ENCODE measurements at regions of chr18 and their contacts with region 1.

Region 1: DNA sequence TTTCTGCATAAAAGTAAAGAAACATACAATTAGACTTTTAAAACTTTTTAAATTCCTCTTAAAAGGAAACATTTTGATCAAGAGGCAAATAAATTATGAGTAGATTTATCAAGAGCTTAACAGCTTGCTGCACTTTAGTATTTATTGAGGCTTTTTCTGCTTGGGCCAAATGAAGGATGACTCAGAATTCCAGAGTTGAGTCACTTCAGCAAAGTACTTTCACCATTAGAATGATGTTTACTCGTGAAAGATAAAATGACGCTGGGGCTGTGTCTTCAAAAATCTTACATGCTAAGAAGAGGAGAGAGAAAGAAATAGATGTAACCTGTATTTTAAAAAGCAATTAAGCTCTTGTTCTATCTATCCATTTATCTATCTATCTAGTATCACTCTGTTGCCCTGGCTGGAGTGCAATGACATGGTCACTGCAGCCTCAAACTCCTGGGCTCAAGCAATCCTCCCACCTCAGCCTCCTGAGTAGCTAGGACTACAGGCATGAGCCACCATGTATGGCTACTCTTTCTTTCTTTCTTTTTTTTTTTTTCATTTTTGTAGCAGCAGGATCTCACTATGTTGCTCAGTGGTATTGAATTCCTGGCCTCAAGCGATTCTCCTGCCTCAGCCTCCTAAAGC is 75.3 kb upstream of the RIOK3 start:
- DNase-seq: peak; percentile 77
- H3K4me3 Mint-ChIP-seq: peak overlapping the region; percentile 46
- H3K27ac Mint-ChIP-seq: peak overlapping the region; percentile 84
- H3K4me1 Mint-ChIP-seq: peaks cover 24% of the 10 kb centered on the region
- H3K27me3 Mint-ChIP-seq: no peaks in the 10 kb centered on the region
- CTCF ChIP-seq: no peak

Region 2: GRCh38 chr18:22800551-22800951 is 577.2 kb before region 1 on chr18:
- CTCF ChIA-PET with region 1: interaction called, 10 read pairs
- POLR2A ChIA-PET with region 1: interaction called, 4 read pairs
- intact Hi-C with region 1: no loop called
- DNase-seq: no peak
- H3K4me3 Mint-ChIP-seq: no peak overlapping the region
- H3K27ac Mint-ChIP-seq: no peak overlapping the region
- H3K4me1 Mint-ChIP-seq: peaks cover 8% of the 10 kb centered on the region
- H3K27me3 Mint-ChIP-seq: no peaks in the 10 kb centered on the region
- CTCF ChIP-seq: no peak

Region 3: DNA sequence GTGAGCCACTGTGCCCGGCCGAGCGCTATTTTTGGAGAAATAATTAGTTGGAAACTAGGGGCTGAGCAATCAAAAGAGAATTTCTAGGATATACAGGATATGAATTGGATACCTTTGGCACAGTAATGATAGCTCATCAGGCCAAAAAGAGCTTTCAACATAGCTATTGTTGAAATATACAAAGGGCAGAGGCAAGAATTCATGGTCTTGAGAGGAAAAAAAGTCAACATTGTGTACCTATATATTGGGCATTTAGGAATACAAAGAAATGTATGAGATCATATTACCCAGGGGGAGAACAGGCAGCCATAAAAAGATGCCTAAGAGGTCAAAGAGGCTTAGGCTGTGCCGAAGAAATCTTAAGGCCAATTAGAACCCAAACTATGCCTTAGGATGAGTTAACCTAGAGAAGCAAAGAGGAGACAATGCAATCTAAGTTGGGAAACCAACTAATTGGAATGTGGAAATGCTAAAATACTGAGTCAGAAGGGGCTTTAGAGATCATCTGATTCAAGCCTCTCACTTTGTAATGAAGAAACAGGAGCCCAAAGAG is 345.7 kb before region 1 on chr18:
- CTCF ChIA-PET with region 1: interaction called, 58 read pairs
- POLR2A ChIA-PET with region 1: interaction called, 38 read pairs
- intact Hi-C with region 1: loop called (anchors 1 kb)
- DNase-seq: peak; percentile 75
- H3K4me3 Mint-ChIP-seq: no peak overlapping the region
- H3K27ac Mint-ChIP-seq: peak overlapping the region; percentile 50
- H3K4me1 Mint-ChIP-seq: peaks cover 17% of the 10 kb centered on the region
- H3K27me3 Mint-ChIP-seq: no peaks in the 10 kb centered on the region
- CTCF ChIP-seq: no peak

Region 4: DNA sequence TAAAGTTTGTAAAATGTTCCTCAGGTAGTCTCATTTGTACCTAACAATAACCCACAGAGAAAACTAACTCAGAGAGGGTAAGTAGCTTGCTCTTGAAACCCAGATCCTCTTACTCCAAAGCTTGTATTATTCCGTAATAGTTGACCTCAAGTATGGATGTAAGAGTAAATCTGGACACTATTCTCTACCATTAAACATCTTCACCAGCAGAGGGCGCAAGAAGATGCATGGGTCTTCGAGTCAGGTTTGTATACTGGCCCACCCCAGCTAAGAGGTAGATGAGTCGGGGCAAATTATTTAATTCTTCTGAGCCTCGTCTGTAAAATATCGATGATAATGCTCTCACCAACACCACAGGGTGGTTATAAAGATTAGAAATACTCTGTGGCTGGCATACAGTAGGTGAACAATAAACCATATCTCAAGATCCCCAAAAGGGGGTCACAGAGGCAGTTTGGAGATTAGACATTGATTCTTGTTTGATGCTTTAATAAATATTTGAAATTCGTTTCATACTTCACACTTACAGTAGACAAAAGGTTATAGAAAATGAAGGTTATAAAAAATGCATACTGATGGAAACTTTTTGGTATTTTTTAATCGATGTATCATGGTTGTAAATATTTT is 246.0 kb before region 1 on chr18:
- CTCF ChIA-PET with region 1: interaction called, 67 read pairs
- POLR2A ChIA-PET with region 1: interaction called, 44 read pairs
- intact Hi-C with region 1: loop called (anchors 1 kb)
- DNase-seq: peak; percentile 90
- H3K4me3 Mint-ChIP-seq: no peak overlapping the region
- H3K27ac Mint-ChIP-seq: no peak overlapping the region
- H3K4me1 Mint-ChIP-seq: peaks cover 11% of the 10 kb centered on the region
- H3K27me3 Mint-ChIP-seq: no peaks in the 10 kb centered on the region
- CTCF ChIP-seq: peak; percentile 54

Region 5: GRCh38 chr18:23250893-23251656 is 126.7 kb before region 1 on chr18:
- CTCF ChIA-PET with region 1: interaction called, 4 read pairs
- POLR2A ChIA-PET with region 1: interaction called, 4 read pairs
- intact Hi-C with region 1: loop called (anchors 2 kb)
- DNase-seq: peak; percentile 73
- H3K4me3 Mint-ChIP-seq: no peak overlapping the region
- H3K27ac Mint-ChIP-seq: peak overlapping the region; percentile 75
- H3K4me1 Mint-ChIP-seq: peaks cover 13% of the 10 kb centered on the region
- H3K27me3 Mint-ChIP-seq: no peaks in the 10 kb centered on the region
- CTCF ChIP-seq: no peak

Region 6: DNA sequence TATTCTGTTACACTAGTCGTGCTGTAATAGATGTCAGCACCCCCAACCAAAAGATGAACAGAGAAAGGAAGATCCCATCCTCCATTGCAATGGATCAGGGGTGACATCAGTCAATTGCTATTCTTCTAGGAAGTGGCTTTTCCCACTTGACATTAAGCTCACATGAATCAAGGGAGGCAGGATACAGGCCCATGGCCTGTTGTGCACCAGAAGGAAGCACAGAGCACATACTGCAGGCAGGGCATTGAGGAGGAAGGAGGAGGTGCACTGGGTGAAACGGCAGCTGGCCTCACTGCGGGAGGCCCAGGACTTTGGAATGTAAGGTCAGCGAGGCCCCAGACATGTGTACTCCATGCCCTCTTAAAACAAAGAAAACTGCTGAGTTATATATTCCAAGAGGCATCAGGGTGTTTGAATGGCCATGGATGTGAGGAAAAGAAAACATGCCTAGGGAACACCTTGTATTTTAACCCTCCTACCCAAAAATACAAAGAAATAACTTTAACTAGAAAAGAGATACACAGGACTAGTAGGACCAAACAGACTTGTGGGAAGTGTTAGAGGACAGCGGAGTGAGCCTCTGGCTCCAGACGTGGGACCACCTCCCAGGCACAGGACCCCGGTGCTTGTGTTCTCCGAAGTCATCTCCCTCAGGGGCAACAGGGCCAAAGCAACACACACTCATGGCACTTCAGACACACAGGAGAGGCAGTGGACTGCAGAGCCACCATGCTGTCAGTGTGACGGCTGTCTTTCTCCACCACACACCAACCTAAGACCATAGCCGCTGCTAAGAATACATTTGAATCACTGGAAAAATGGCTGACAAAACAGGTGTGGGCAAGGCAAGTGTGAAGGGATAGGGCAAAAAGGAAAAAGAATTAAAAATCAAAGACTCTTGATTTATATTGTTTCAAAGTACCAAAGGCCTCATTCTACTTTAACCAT is 23.9 kb after region 1 on chr18:
- CTCF ChIA-PET with region 1: interaction called, 14 read pairs
- POLR2A ChIA-PET with region 1: no interaction called
- intact Hi-C with region 1: no loop called
- DNase-seq: peak; percentile 26
- H3K4me3 Mint-ChIP-seq: no peak overlapping the region
- H3K27ac Mint-ChIP-seq: no peak overlapping the region
- H3K4me1 Mint-ChIP-seq: peaks cover 8% of the 10 kb centered on the region
- H3K27me3 Mint-ChIP-seq: no peaks in the 10 kb centered on the region
- CTCF ChIP-seq: no peak

Region 7: DNA sequence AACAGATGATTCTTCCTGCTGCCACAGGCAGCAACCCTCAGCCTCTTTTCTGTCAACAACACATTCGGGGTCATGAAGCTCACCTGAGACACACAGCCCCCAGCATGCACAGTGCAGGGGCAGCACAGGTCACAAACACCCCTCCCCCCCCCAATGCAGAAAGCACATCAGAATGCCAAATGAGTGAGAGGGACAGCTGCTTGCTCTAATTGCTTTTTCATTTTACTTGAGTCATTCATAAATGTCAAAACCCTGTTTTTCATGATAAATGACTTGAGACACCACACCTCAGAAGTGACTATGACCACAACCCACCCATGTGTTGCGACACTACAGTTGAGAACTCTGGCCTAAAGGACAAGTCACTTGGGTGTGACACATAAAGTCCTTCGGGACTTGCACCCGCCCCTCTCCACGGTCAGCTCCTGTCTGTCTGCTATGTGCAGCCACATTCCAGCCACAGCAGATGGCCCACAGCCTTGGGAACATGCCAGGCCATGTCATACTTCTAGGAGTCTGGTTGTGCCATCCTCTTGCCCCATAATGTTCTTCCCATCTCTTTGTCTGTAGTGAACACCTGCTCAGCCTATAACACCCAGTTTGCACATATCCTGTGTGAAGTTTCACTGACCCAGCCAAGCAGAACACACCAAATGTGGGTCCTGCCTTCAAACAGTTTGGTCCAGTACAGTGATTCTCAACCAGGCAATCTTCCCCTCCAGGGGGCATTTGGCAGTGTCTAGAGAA is 45.1 kb after region 1 on chr18:
- CTCF ChIA-PET with region 1: no interaction called
- POLR2A ChIA-PET with region 1: interaction called, 10 read pairs
- intact Hi-C with region 1: no loop called
- DNase-seq: peak; percentile 93
- H3K4me3 Mint-ChIP-seq: peak overlapping the region; percentile 32
- H3K27ac Mint-ChIP-seq: peak overlapping the region; percentile 46
- H3K4me1 Mint-ChIP-seq: peaks cover 26% of the 10 kb centered on the region
- H3K27me3 Mint-ChIP-seq: no peaks in the 10 kb centered on the region
- CTCF ChIP-seq: no peak

Measured in MCF 10A (cell line).